GM12878 (cell line): ENCODE measurements at regions of chr1 and their contacts with region 1.

Region 1: GRCh38 chr1:175154629-175155472 is 37.7 kb downstream of the KIAA0040 start:
- DNase-seq: no peak
- ATAC-seq: peak; percentile 81
- H3K4me3 ChIP-seq: no peak overlapping the region
- H3K27ac ChIP-seq: no peak overlapping the region
- H3K4me1 ChIP-seq: peaks cover 7% of the 10 kb centered on the region; the same call in 1 of the 2 replicates
- H3K27me3 ChIP-seq: peaks cover 0 to 5% of the 10 kb centered on the region in 2 experiments; a peak in 2 of 4 replicates
- CTCF ChIP-seq: peak; percentile 88 to 91 (median 88)
- EP300 ChIP-seq: no peak
- POLR2A ChIP-seq: no peak
- RAD21 ChIP-seq: peak; percentile 99

Region 2: DNA sequence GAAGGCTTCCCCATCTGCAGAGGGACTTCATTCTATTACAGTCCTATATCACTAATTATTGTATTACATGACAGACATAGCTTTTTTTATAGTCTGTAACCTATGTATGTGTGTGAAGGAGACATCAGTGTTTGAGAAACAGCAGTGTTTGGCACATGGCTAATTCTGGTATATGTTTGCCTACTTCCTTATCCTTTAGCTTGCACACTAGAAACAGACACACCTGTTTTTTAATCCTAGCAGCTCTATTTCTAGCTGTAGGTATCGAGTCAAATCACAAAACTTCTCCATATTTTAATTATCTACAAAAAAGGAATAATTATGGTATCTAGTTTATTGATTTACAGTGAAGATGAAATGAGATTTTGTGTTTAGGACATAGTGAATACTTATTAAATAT is 284.5 kb before region 1 on chr1:
- CTCF ChIA-PET with region 1: no interaction called
- POLR2A ChIA-PET with region 1: no interaction called
- RAD21 ChIA-PET with region 1: no interaction called
- SMC1A ChIA-PET with region 1: no interaction called
- in situ Hi-C with region 1: no loop called
- intact Hi-C with region 1: no loop called
- DNase-seq: no peak
- ATAC-seq: no peak
- H3K4me3 ChIP-seq: no peak overlapping the region
- H3K27ac ChIP-seq: no peak overlapping the region
- H3K4me1 ChIP-seq: peaks cover 25% of the 10 kb centered on the region
- H3K27me3 ChIP-seq: no peaks in the 10 kb centered on the region
- CTCF ChIP-seq: no peak
- EP300 ChIP-seq: no peak
- POLR2A ChIP-seq: no peak
- RAD21 ChIP-seq: no peak

Region 3: DNA sequence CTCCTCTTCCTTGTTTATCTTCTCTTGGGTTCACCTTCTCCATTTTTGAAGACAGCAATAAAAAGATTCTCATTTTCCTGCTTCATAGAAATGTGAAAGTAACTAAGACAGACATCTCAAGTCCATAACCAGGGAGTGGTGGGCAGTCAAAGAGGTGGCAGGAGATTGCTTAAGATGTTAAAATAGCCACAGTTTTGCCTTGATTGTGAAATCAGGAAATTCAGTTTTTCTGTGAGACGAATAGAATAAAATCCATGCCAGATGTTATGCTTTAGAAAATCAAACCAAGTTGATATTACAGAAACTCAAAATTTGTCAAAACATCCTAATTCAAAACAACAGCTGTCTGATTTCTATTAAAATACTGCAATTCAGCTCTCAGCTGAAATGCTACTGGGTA is 30.0 kb before region 1 on chr1:
- CTCF ChIA-PET with region 1: interaction called, 135 read pairs
- POLR2A ChIA-PET with region 1: no interaction called
- RAD21 ChIA-PET with region 1: interaction called, 13 read pairs
- SMC1A ChIA-PET with region 1: interaction called, 5 read pairs
- in situ Hi-C with region 1: no loop called
- intact Hi-C with region 1: no loop called
- DNase-seq: no peak
- ATAC-seq: no peak
- H3K4me3 ChIP-seq: no peak overlapping the region
- H3K27ac ChIP-seq: no peak overlapping the region
- H3K4me1 ChIP-seq: no peaks in the 10 kb centered on the region
- H3K27me3 ChIP-seq: no peaks in the 10 kb centered on the region
- CTCF ChIP-seq: no peak
- EP300 ChIP-seq: no peak
- POLR2A ChIP-seq: no peak
- RAD21 ChIP-seq: no peak

Region 4: GRCh38 chr1:175192630-175193526 is 38.0 kb after region 1 on chr1 and contains the start of gene KIAA0040:
- CTCF ChIA-PET with region 1: interaction called, 66 read pairs
- POLR2A ChIA-PET with region 1: interaction called, 4 read pairs
- RAD21 ChIA-PET with region 1: interaction called, 58 read pairs
- SMC1A ChIA-PET with region 1: interaction called, 47 read pairs
- in situ Hi-C with region 1: no loop called
- intact Hi-C with region 1: no loop called
- DNase-seq: no peak
- ATAC-seq: peak; percentile 78
- H3K4me3 ChIP-seq: peak within 1 kb of the TSS; percentile 83
- H3K27ac ChIP-seq: peak within 1 kb of the TSS; percentile 23
- H3K4me1 ChIP-seq: peaks cover 37% of the 10 kb centered on the region
- H3K27me3 ChIP-seq: no peaks in the 10 kb centered on the region
- CTCF ChIP-seq: peak in 1 of 3 experiments; percentile 27; a peak in 2 of 6 replicates
- EP300 ChIP-seq: no peak
- POLR2A ChIP-seq: peak; percentile 72
- RAD21 ChIP-seq: no peak
- polyA plus RNA-seq, gene KIAA0040: 7.6 to 8.3 TPM

Region 5: DNA sequence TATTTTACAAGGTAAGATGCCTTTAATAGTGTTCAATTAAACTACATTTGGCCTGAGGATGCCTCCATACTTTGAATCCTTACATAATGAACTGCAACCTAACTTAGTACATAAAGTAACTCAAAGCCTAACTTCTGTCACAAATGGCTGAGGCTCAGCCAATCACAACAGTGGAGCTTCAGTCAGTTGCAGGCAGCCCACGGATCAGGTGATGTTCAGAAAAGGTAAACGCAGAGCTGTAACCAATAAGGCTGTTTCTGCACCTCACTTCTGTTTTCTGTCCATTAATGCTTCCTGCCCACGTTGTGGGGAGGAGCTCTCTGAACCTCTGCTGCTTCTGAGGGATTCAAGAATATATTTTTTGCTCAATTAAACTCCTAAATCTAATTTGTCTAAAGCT is 132.5 kb after region 1 on chr1:
- CTCF ChIA-PET with region 1: interaction called, 11 read pairs
- POLR2A ChIA-PET with region 1: no interaction called
- RAD21 ChIA-PET with region 1: interaction called, 3 read pairs
- SMC1A ChIA-PET with region 1: interaction called, 9 read pairs
- in situ Hi-C with region 1: no loop called
- intact Hi-C with region 1: no loop called
- DNase-seq: peak; percentile 31
- ATAC-seq: peak; percentile 73
- H3K4me3 ChIP-seq: no peak overlapping the region
- H3K27ac ChIP-seq: peak overlapping the region; percentile 39
- H3K4me1 ChIP-seq: peaks cover 14% of the 10 kb centered on the region
- H3K27me3 ChIP-seq: no peaks in the 10 kb centered on the region
- CTCF ChIP-seq: no peak
- EP300 ChIP-seq: no peak
- POLR2A ChIP-seq: 0 out of 2 replicates have a peak, but pooled peaks have one; percentile 25
- RAD21 ChIP-seq: no peak

Region 6: GRCh38 chr1:175331891-175332290 is 177.0 kb after region 1 on chr1:
- CTCF ChIA-PET with region 1: interaction called, 129 read pairs
- POLR2A ChIA-PET with region 1: no interaction called
- RAD21 ChIA-PET with region 1: interaction called, 16 read pairs
- SMC1A ChIA-PET with region 1: interaction called, 11 read pairs
- in situ Hi-C with region 1: no loop called
- intact Hi-C with region 1: no loop called
- DNase-seq: no peak
- ATAC-seq: no peak
- H3K4me3 ChIP-seq: no peak overlapping the region
- H3K27ac ChIP-seq: no peak overlapping the region
- H3K4me1 ChIP-seq: no peaks in the 10 kb centered on the region
- H3K27me3 ChIP-seq: peaks cover 2 to 4% of the 10 kb centered on the region in 2 experiments; a peak in 2 of 4 replicates
- CTCF ChIP-seq: no peak
- EP300 ChIP-seq: no peak
- POLR2A ChIP-seq: no peak
- RAD21 ChIP-seq: no peak

Region 7: GRCh38 chr1:175434283-175434860 is 279.5 kb after region 1 on chr1:
- CTCF ChIA-PET with region 1: interaction called, 12 read pairs
- POLR2A ChIA-PET with region 1: no interaction called
- RAD21 ChIA-PET with region 1: interaction called, 9 read pairs
- SMC1A ChIA-PET with region 1: interaction called, 9 read pairs
- in situ Hi-C with region 1: loop called (anchors 10 kb)
- intact Hi-C with region 1: loop called (anchors 1 kb)
- DNase-seq: no peak
- ATAC-seq: peak; percentile 46; the same call in 2 of the 3 replicates
- H3K4me3 ChIP-seq: no peak overlapping the region
- H3K27ac ChIP-seq: no peak overlapping the region
- H3K4me1 ChIP-seq: no peaks in the 10 kb centered on the region
- H3K27me3 ChIP-seq: no peaks in the 10 kb centered on the region
- CTCF ChIP-seq: peak; percentile 38 to 73 (median 58)
- EP300 ChIP-seq: no peak
- POLR2A ChIP-seq: no peak
- RAD21 ChIP-seq: peak; percentile 46

Region 8: DNA sequence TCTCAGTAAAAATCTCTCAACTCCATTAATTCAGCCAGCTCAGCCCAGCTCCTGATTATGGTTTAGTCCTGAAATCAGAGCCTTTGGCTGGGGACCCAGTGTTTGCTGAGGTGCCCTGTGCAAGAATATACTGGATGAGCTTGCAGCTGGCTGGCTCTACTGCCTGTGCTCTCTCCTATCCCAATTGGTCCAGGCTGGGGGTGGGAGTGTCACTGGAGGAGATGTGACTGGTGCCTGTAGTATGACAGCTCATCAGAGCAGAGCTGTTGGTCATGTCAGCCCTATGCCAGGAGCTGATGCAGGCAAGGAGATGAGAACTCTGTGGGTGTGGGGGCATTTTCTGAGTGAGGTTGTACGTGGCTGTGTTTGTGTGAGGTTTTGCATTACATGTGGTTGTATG is 501.6 kb after region 1 on chr1:
- CTCF ChIA-PET with region 1: no interaction called
- POLR2A ChIA-PET with region 1: no interaction called
- RAD21 ChIA-PET with region 1: no interaction called
- SMC1A ChIA-PET with region 1: no interaction called
- in situ Hi-C with region 1: no loop called
- intact Hi-C with region 1: no loop called
- DNase-seq: no peak
- ATAC-seq: no peak
- H3K4me3 ChIP-seq: no peak overlapping the region
- H3K27ac ChIP-seq: no peak overlapping the region
- H3K4me1 ChIP-seq: no peaks in the 10 kb centered on the region
- H3K27me3 ChIP-seq: no peaks in the 10 kb centered on the region; a peak in 1 of 4 replicates
- CTCF ChIP-seq: no peak
- EP300 ChIP-seq: no peak
- POLR2A ChIP-seq: no peak
- RAD21 ChIP-seq: no peak

Region 9: DNA sequence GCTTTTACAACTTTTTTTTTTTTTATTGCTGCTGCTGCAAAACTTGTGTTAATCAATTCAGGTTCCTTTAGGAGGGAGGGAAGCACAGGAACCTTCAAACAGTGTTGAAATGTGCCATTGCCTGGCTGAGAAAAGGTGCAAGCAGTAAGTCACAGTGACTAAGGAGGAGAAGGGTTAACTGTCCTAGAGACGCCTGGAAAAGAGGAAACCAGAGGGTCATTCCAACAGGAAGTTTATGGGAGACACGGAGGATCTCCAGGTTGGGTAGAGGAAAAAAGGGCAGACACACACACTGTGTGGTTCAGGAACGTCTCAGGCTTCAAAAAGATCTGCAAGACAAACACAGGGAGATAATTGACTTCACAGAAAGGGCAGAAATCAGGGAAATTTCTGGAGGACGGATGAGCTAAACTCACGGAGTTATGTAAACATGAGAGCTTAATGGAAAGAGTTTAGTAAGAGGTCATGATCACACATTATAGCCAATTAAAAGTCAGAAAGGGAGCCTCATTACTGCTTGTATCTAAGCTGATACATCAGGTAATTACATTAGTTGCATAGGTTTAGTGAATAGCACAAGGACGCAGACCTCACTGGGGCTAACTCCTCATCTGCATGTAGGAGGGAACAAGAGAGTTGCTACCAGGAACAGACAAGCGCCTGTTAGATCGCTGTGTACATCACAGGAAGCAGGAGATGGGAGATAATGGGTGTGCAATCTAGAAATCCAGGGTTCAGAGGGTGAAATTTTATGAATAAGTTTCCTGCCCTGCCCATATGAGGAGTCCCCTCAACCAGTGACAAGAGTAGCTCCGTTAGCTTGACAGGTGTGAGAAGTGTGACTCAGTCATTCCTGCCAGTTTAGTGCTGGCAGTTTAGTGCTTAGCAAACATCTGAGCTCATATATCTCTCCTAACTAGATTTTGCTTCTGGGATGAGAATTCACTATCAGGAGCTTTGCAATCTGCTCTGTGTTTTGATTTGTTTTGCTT is 685.1 kb after region 1 on chr1:
- CTCF ChIA-PET with region 1: no interaction called
- POLR2A ChIA-PET with region 1: no interaction called
- RAD21 ChIA-PET with region 1: no interaction called
- SMC1A ChIA-PET with region 1: no interaction called
- in situ Hi-C with region 1: no loop called
- intact Hi-C with region 1: no loop called
- DNase-seq: no peak
- ATAC-seq: no peak; the same call in 2 of the 3 replicates
- H3K4me3 ChIP-seq: no peak overlapping the region
- H3K27ac ChIP-seq: no peak overlapping the region
- H3K4me1 ChIP-seq: no peaks in the 10 kb centered on the region
- H3K27me3 ChIP-seq: no peaks in the 10 kb centered on the region
- CTCF ChIP-seq: no peak
- EP300 ChIP-seq: no peak
- POLR2A ChIP-seq: no peak
- RAD21 ChIP-seq: no peak